ENCODE measurements at regions of chr15 and their contacts with region 1.

Region 1: DNA sequence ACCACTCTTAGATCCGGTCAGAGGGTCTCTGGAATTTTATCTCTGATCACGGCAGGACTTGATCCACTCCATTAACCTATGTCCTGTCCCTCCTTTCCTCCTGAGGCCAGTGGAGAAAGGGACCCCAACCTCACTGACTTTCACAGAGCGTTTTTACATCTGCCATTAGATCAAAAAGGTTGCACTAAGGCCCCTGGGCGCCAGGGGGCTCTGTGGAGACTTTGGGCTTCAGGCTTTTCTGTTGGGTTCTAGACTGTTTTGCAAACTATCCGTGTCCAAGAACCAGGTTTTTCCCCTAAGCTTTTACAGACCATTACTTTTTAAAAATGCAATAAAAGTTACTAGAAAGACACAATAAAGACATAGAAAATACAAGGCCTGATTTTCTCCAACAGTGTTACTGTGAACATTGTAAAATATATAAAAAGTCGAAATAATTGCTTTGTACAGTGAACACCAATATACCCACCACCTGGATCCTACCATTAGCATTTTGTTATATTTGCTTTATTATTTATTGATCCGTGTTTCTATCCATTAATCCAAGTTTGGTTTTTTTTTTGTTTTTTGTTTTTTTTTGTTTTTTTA is 159.7 kb downstream of the POLR2M start:
- DNase-seq: peak; percentile 74 to 78
- H3K4me3 ChIP-seq: no peak overlapping the region
- H3K27ac ChIP-seq: no peak overlapping the region
- H3K4me1 ChIP-seq: no peaks in the 10 kb centered on the region
- H3K27me3 ChIP-seq: peaks cover 0 to 12% (median 0%) of the 10 kb centered on the region in 3 donors
- CTCF ChIP-seq: peak in 5 of 7 experiments; percentile 12 to 69 (median 57)
- EP300 ChIP-seq: no peak
- POLR2A ChIP-seq: no peak

Region 2: GRCh38 chr15:57654153-57654852 is 211.9 kb before region 1 on chr15:
- intact Hi-C with region 1: loop called (anchors 10 kb)
- DNase-seq: peak in 1 of 2 donors; percentile 65
- H3K4me3 ChIP-seq: no peak overlapping the region
- H3K27ac ChIP-seq: peak overlapping the region in 1 of 5 donors; percentile 4
- H3K4me1 ChIP-seq: peaks cover 0 to 4% (median 0%) of the 10 kb centered on the region in 4 donors
- H3K27me3 ChIP-seq: no peaks in the 10 kb centered on the region
- CTCF ChIP-seq: no peak
- EP300 ChIP-seq: no peak
- POLR2A ChIP-seq: no peak

Region 3: GRCh38 chr15:58046467-58046866 is 180.2 kb after region 1 on chr15:
- intact Hi-C with region 1: no loop called
- DNase-seq: no peak
- H3K4me3 ChIP-seq: no peak overlapping the region
- H3K27ac ChIP-seq: no peak overlapping the region
- H3K4me1 ChIP-seq: no peaks in the 10 kb centered on the region
- H3K27me3 ChIP-seq: peaks cover 0 to 5% (median 0%) of the 10 kb centered on the region in 3 donors
- CTCF ChIP-seq: no peak
- EP300 ChIP-seq: no peak
- POLR2A ChIP-seq: no peak

Region 4: DNA sequence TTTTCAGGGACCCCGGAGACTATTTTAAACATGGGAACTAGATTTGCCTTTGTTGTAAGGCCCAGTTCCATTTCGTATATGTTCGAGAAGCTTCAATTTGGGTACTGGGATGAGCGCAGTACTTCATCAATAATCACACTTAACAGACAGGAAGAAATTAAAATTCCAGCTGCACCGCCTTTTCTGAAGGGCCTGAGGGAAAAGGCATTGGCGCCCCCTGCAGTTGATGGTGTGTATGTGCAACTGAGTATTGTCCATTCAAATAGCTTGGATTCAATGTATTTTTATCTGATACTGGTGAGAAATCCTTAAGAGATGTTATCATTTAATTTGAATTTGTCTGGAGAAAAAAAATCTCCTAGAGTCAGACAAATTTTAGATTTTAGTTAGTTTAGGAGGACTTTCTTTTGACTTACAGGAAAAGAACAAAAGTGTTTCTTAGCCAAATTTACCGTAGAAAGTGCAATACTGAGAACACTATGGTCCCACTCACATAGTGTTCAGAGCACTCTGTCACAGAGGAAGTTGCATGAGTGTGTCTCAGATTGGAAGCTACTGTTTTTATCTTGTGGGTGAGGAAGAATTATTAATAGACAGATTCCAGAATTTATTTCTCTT is 204.7 kb after region 1 on chr15:
- intact Hi-C with region 1: loop called (anchors 5 kb)
- DNase-seq: peak; percentile 61 to 83
- H3K4me3 ChIP-seq: no peak overlapping the region
- H3K27ac ChIP-seq: no peak overlapping the region
- H3K4me1 ChIP-seq: peaks cover 3 to 8% (median 6%) of the 10 kb centered on the region in 4 donors
- H3K27me3 ChIP-seq: peaks cover 3 to 56% (median 12%) of the 10 kb centered on the region in 3 donors
- CTCF ChIP-seq: peak in 5 of 7 experiments; percentile 58 to 88 (median 64)
- EP300 ChIP-seq: no peak
- POLR2A ChIP-seq: no peak

Measured in stomach (tissue), 19 donors.